CD8-positive, alpha-beta T cell (primary cell): ENCODE measurements at regions of chr1 and their contacts with region 1.

Region 1: DNA sequence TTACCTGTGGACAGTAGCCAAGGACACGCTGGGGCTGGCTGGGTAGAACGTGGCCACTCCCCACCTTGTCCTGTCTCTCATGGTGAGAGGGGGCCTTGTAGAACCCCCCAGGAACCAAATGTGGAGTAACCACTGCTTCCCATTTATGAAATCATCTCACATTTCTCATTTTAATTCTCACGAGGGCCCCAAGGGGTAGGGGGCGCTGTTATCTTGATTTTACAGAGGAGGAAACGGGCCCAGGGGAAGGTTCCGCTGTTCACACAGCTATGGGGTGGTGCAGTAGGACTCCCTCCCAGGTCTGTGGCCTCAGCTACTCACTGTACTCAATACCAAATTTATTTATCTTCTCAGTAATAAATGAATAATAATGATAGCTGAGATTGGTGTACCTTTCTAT is 5.5 kb downstream of the SMPDL3B start:
- DNase-seq: peak; percentile 57 to 83 (median 77)
- ATAC-seq: peak; percentile 91
- H3K4me3 ChIP-seq: no peak overlapping the region
- H3K4me3 Mint-ChIP-seq: no peak overlapping the region
- H3K27ac ChIP-seq: peak overlapping the region in 1 of 2 experiments; percentile 40
- H3K27ac Mint-ChIP-seq: peak overlapping the region; percentile 74
- H3K4me1 ChIP-seq: peaks cover 21% of the 10 kb centered on the region
- H3K4me1 Mint-ChIP-seq: peaks cover 33% of the 10 kb centered on the region
- H3K27me3 ChIP-seq: no peaks in the 10 kb centered on the region
- H3K27me3 Mint-ChIP-seq: peaks cover 7% of the 10 kb centered on the region
- CTCF ChIP-seq: peak; percentile 63

Region 2: DNA sequence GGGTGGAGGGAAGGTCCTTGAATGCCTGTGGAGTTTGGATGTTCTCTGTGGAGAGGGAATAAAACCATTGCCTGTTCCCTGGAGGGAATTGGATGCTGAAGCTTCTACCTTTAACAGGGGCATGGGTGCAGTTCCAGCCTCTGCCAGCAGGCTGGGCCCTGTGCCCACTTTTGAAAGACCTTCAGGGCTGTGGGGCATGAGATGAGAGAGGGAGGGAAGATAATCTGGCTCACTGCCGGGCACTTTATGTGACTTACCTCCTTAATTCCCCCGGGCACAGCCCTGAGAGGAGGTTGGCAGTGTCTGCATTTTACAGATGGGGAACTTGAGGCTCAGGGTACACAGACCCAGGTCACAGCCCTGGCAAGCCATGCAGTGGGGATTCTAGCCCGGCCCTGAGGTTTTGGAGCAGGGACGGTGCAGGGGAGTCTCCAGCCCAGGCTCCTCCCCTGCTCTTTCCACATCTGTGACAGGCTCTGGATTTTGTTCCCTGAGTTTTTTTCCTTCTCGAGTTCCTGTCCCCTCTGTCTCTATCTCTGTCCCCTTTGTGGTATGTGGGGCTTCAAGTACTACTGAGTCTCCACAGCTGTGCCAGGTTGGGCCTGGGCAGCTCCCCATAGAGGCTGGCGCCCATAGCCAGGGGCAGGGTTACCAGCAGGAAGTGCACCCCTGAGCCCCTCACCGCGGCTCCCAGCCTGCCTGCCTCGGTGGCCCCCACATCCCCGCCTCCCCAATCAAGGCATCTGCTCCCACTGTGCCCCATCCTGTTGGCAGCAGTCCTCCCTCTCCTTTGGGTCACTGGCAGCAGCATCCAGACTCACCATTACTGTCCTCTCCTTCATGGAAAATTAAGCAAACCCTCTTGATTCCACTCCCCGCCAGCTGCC is 82.0 kb before region 1 on chr1:
- CTCF ChIA-PET with region 1: interaction called, 21 read pairs
- POLR2A ChIA-PET with region 1: no interaction called
- intact Hi-C with region 1: loop called (anchors 1 to 2 kb)
- DNase-seq: peak; percentile 71 to 91 (median 85)
- ATAC-seq: peak; percentile 100
- H3K4me3 ChIP-seq: no peak overlapping the region
- H3K4me3 Mint-ChIP-seq: no peak overlapping the region
- H3K27ac ChIP-seq: no peak overlapping the region
- H3K27ac Mint-ChIP-seq: no peak overlapping the region
- H3K4me1 ChIP-seq: peaks cover 11% of the 10 kb centered on the region
- H3K4me1 Mint-ChIP-seq: peaks cover 17% of the 10 kb centered on the region
- H3K27me3 ChIP-seq: no peaks in the 10 kb centered on the region
- H3K27me3 Mint-ChIP-seq: no peaks in the 10 kb centered on the region
- CTCF ChIP-seq: peak; percentile 100

Region 3: GRCh38 chr1:27952147-27952546 is 11.8 kb after region 1 on chr1:
- CTCF ChIA-PET with region 1: interaction called, 19 read pairs
- POLR2A ChIA-PET with region 1: no interaction called
- intact Hi-C with region 1: no loop called
- DNase-seq: no peak
- ATAC-seq: no peak
- H3K4me3 ChIP-seq: no peak overlapping the region
- H3K4me3 Mint-ChIP-seq: no peak overlapping the region
- H3K27ac ChIP-seq: no peak overlapping the region
- H3K27ac Mint-ChIP-seq: no peak overlapping the region
- H3K4me1 ChIP-seq: no peaks in the 10 kb centered on the region
- H3K4me1 Mint-ChIP-seq: no peaks in the 10 kb centered on the region
- H3K27me3 ChIP-seq: no peaks in the 10 kb centered on the region
- H3K27me3 Mint-ChIP-seq: no peaks in the 10 kb centered on the region
- CTCF ChIP-seq: no peak

Region 4: DNA sequence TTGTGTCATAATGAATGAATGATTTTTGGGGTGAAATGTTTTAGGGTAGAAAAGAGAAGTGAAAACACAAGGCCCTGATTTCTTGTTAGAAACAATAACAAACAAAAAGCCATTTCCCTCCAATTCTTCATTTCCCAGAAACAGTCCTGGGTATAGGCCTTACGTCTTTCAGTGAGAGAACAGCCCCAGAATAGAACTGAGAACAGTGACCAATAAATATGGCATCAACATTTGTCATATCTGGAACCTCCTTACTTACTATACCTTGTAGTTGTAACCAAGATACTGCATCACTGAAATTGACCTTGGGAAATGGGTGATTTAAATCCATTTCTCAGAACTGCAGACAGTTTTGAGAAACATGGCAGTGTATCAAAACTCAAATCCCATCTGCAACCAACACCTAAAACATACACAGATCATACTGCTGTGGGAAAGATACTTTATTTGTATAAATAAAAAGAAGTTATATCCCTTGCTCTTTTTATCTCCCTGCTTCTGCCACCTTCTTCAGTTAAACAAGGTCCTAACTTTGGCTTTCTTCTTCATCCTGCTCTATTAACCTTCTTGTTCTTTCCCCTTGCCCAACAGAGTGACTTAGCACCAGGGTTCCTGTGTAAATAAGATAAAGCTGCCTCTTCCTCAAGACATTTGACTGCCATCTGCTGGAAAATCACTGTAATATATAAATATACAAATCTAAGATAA is 39.0 kb after region 1 on chr1:
- CTCF ChIA-PET with region 1: interaction called, 115 read pairs
- POLR2A ChIA-PET with region 1: no interaction called
- intact Hi-C with region 1: loop called (anchors 1 kb)
- DNase-seq: peak in 2 of 9 experiments; percentile 61 to 74
- ATAC-seq: peak; percentile 70
- H3K4me3 ChIP-seq: no peak overlapping the region
- H3K4me3 Mint-ChIP-seq: no peak overlapping the region
- H3K27ac ChIP-seq: no peak overlapping the region
- H3K27ac Mint-ChIP-seq: no peak overlapping the region
- H3K4me1 ChIP-seq: no peaks in the 10 kb centered on the region
- H3K4me1 Mint-ChIP-seq: no peaks in the 10 kb centered on the region
- H3K27me3 ChIP-seq: no peaks in the 10 kb centered on the region
- H3K27me3 Mint-ChIP-seq: no peaks in the 10 kb centered on the region
- CTCF ChIP-seq: peak; percentile 65

Region 5: DNA sequence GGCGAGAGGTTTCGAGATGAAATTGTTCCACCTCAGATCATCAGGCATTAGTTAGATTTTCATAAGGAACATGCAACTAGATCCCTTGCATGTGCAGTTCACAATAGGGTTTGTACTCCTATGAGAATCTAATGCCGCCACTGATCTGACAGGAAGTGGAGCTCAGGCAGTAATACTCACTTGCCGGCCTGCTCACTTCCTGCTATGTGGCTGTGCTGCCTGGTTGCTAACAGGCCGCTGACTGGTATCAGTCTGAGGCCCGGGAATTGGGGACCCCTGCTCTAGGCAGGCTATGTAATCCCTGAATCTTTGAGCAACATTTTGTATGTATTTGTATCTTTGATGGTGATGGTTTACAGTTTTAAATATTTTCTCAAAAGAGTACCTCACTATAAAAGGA is 52.0 kb after region 1 on chr1:
- CTCF ChIA-PET with region 1: interaction called, 14 read pairs
- POLR2A ChIA-PET with region 1: interaction called, 3 read pairs
- intact Hi-C with region 1: no loop called
- DNase-seq: peak; percentile 16 to 77 (median 61)
- ATAC-seq: peak; percentile 97
- H3K4me3 ChIP-seq: no peak overlapping the region
- H3K4me3 Mint-ChIP-seq: peak overlapping the region; percentile 26
- H3K27ac ChIP-seq: peak overlapping the region; percentile 18 to 77
- H3K27ac Mint-ChIP-seq: peak overlapping the region; percentile 79
- H3K4me1 ChIP-seq: peaks cover 8% of the 10 kb centered on the region
- H3K4me1 Mint-ChIP-seq: peaks cover 23% of the 10 kb centered on the region
- H3K27me3 ChIP-seq: no peaks in the 10 kb centered on the region
- H3K27me3 Mint-ChIP-seq: no peaks in the 10 kb centered on the region
- CTCF ChIP-seq: no peak

Region 6: DNA sequence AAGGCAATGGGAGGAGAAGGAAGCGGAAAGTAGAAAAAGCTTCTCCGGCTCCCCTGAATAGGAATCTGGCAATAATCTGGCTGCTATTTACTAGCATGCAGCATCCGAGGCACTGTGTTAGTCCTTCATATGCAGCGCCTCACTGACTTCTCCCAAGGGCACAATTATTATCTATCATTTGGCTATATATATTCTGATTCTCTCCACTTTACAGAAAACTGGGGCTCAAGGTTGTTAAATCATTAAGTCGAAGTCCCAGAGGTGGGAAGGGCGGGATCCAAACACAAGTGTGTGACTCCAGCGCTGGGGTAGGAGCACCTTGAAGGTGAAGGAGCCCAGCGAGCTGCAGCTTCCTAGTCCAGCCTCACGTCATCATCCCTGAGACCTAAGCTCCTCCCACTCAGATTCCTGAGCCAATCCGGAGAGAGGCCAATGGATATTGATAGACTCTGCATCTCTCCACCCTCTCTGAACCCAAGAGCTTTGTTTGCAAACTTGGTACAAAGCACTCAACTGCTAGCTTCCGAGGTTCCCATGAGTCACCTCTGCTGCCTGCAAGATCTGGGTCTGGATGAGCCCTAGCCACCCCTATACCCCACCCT is 164.7 kb after region 1 on chr1:
- CTCF ChIA-PET with region 1: no interaction called
- POLR2A ChIA-PET with region 1: no interaction called
- intact Hi-C with region 1: no loop called
- DNase-seq: peak in 1 of 9 experiments; percentile 17
- ATAC-seq: no peak
- H3K4me3 ChIP-seq: no peak overlapping the region
- H3K4me3 Mint-ChIP-seq: no peak overlapping the region
- H3K27ac ChIP-seq: no peak overlapping the region
- H3K27ac Mint-ChIP-seq: no peak overlapping the region
- H3K4me1 ChIP-seq: no peaks in the 10 kb centered on the region
- H3K4me1 Mint-ChIP-seq: no peaks in the 10 kb centered on the region
- H3K27me3 ChIP-seq: no peaks in the 10 kb centered on the region
- H3K27me3 Mint-ChIP-seq: peaks cover 2% of the 10 kb centered on the region
- CTCF ChIP-seq: no peak

Region 7: DNA sequence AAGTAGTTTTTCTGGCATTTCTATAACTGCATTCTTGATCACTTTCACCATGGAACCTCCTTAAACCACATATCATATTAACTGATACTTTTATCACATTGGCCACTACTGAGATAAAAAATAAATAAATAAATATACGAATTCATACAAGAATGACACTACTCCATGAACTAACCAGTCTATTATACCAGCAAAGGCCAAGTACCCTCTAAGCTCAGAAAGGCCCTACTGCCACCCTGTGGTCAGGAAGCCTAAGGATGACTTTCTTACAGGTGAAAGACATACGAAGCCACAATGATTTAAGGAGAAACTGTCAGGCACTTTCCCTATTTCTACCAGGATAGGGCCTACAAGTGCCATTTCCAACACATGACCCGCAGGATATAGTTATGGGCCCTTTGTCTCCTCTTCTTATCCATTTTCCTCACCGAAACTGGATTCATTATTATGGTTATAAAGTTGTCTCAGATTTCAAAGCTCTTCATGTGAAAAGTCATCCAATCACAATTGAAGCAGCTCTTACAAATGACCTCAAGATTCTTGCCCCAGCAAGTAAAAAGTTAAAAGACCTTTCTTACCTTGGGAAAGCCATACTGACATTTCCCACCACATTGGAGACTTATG is 268.6 kb after region 1 on chr1:
- CTCF ChIA-PET with region 1: interaction called, 3 read pairs
- POLR2A ChIA-PET with region 1: no interaction called
- intact Hi-C with region 1: loop called (anchors 1 to 5 kb)
- DNase-seq: peak; percentile 19 to 81 (median 62)
- ATAC-seq: peak; percentile 95
- H3K4me3 ChIP-seq: no peak overlapping the region
- H3K4me3 Mint-ChIP-seq: no peak overlapping the region
- H3K27ac ChIP-seq: no peak overlapping the region
- H3K27ac Mint-ChIP-seq: no peak overlapping the region
- H3K4me1 ChIP-seq: no peaks in the 10 kb centered on the region
- H3K4me1 Mint-ChIP-seq: peaks cover 8% of the 10 kb centered on the region
- H3K27me3 ChIP-seq: no peaks in the 10 kb centered on the region
- H3K27me3 Mint-ChIP-seq: no peaks in the 10 kb centered on the region
- CTCF ChIP-seq: peak; percentile 69